ENCODE measurements at regions of chr5 and their contacts with region 1.

Region 1: DNA sequence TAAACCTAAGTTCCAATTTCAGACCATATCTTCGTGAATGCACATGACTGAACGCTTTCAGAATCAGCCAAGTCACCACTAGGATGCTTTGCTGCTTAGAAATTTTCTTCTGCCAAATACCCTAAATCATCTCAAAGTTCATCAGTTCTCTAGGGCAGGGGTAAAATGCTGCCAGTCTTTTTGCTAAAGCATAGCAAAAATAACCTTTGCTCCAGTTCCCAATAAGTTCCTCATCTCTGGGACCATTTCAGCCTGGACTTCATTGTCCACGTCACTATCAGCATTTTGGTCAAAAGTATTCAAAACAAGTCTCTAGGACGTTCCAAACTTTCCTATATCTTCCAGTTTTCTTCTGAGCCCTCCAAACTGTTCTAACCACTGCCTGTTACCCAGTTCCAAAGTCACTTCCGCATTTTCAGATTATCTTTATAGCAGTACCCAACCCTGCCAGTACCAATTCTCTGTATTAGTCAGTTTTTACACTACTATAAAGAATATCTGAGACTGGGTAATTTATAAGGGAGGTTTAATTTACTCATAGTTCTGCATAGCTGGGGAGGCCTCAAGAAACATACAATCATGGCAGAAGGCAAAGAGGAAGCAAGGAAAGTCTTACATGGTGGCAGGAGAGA is 74.8 kb downstream of the NR3C1 start:
- DNase-seq: no peak

Region 2: GRCh38 chr5:143200781-143201398 is 127.8 kb before region 1 on chr5:
- intact Hi-C with region 1: no loop called
- DNase-seq: no peak

Region 3: GRCh38 chr5:143271431-143271830 is 57.3 kb before region 1 on chr5:
- intact Hi-C with region 1: no loop called
- DNase-seq: no peak

Region 4: GRCh38 chr5:143304836-143305475 is 23.7 kb before region 1 on chr5:
- intact Hi-C with region 1: loop called (anchors 2 kb)
- DNase-seq: no peak

Measured in cardiac septum (tissue), 1 donor.